Caco-2 (cell line): ENCODE measurements at regions of chr7 and their contacts with region 1.

Region 1: GRCh38 chr7:95396136-95397032 is at the start of gene PON3:
- DNase-seq: peak; percentile 73 to 81
- H3K4me3 ChIP-seq: peak within 1 kb of the TSS; percentile 83
- H3K4me3 Mint-ChIP-seq: peak within 1 kb of the TSS; percentile 82
- H3K27ac Mint-ChIP-seq: peak within 1 kb of the TSS; percentile 63
- H3K4me1 ChIP-seq: peaks cover 9% of the 10 kb centered on the region; the same call in 1 of the 2 replicates
- H3K4me1 Mint-ChIP-seq: peaks cover 11% of the 10 kb centered on the region
- H3K27me3 ChIP-seq: no peaks in the 10 kb centered on the region
- H3K27me3 Mint-ChIP-seq: no peaks in the 10 kb centered on the region
- CTCF ChIP-seq: peak; percentile 75 to 87
- total RNA-seq, gene PON3: 13.4 and 15.0 TPM in 2 replicates

Region 2: GRCh38 chr7:95190515-95190914 is 205.9 kb before region 1 on chr7:
- CTCF ChIA-PET with region 1: no interaction called
- POLR2A ChIA-PET with region 1: no interaction called
- intact Hi-C with region 1: no loop called
- DNase-seq: peak in 1 of 2 experiments; percentile 29
- H3K4me3 ChIP-seq: no peak overlapping the region
- H3K4me3 Mint-ChIP-seq: no peak overlapping the region
- H3K27ac Mint-ChIP-seq: no peak overlapping the region
- H3K4me1 ChIP-seq: no peaks in the 10 kb centered on the region
- H3K4me1 Mint-ChIP-seq: no peaks in the 10 kb centered on the region
- H3K27me3 ChIP-seq: no peaks in the 10 kb centered on the region
- H3K27me3 Mint-ChIP-seq: no peaks in the 10 kb centered on the region
- CTCF ChIP-seq: peak; percentile 10 to 15

Region 3: GRCh38 chr7:95434557-95435421 is 38.4 kb after region 1 on chr7 and contains the start of gene PON2:
- CTCF ChIA-PET with region 1: interaction called, 13 read pairs
- POLR2A ChIA-PET with region 1: interaction called, 12 read pairs
- intact Hi-C with region 1: no loop called
- DNase-seq: peak; percentile 93
- H3K4me3 ChIP-seq: peak within 1 kb of the TSS; percentile 89
- H3K4me3 Mint-ChIP-seq: peak within 1 kb of the TSS; percentile 91
- H3K27ac Mint-ChIP-seq: peak within 1 kb of the TSS; percentile 95
- H3K4me1 ChIP-seq: peaks cover 46% of the 10 kb centered on the region
- H3K4me1 Mint-ChIP-seq: peaks cover 14% of the 10 kb centered on the region
- H3K27me3 ChIP-seq: no peaks in the 10 kb centered on the region
- H3K27me3 Mint-ChIP-seq: no peaks in the 10 kb centered on the region
- CTCF ChIP-seq: no peak
- total RNA-seq, gene PON2: 140 and 141 TPM in 2 replicates